ENCODE measurements at regions of chr19 and their contacts with region 1.

Region 1: GRCh38 chr19:14689598-14690503 is at the start of gene ZNF333:
- DNase-seq: peak; percentile 100
- ATAC-seq: peak; percentile 94
- H3K4me3 Mint-ChIP-seq: peak within 1 kb of the TSS; percentile 79
- H3K27ac Mint-ChIP-seq: peak within 1 kb of the TSS; percentile 95
- H3K4me1 Mint-ChIP-seq: peaks cover 17% of the 10 kb centered on the region
- H3K27me3 Mint-ChIP-seq: no peaks in the 10 kb centered on the region
- total RNA-seq, gene ZNF333: 11.7 to 12.7 TPM

Region 2: GRCh38 chr19:14432791-14433553 is 256.9 kb before region 1 on chr19 and contains the start of gene PKN1:
- CTCF ChIA-PET with region 1: no interaction called
- POLR2A ChIA-PET with region 1: no interaction called
- intact Hi-C with region 1: loop called in 1 of 2 experiments (anchors 5 kb)
- DNase-seq: peak; percentile 75
- ATAC-seq: peak; percentile 11
- H3K4me3 Mint-ChIP-seq: peak within 1 kb of the TSS; percentile 73
- H3K27ac Mint-ChIP-seq: peak within 1 kb of the TSS; percentile 71
- H3K4me1 Mint-ChIP-seq: peaks cover 30% of the 10 kb centered on the region
- H3K27me3 Mint-ChIP-seq: no peaks in the 10 kb centered on the region
- total RNA-seq, gene PKN1: 173 to 176 TPM

Region 3: GRCh38 chr19:14540741-14541525 is 148.9 kb before region 1 on chr19:
- CTCF ChIA-PET with region 1: no interaction called
- POLR2A ChIA-PET with region 1: no interaction called
- intact Hi-C with region 1: no loop called
- DNase-seq: no peak
- ATAC-seq: no peak
- H3K4me3 Mint-ChIP-seq: no peak overlapping the region
- H3K27ac Mint-ChIP-seq: no peak overlapping the region
- H3K4me1 Mint-ChIP-seq: peaks cover 45% of the 10 kb centered on the region
- H3K27me3 Mint-ChIP-seq: no peaks in the 10 kb centered on the region

Region 4: DNA sequence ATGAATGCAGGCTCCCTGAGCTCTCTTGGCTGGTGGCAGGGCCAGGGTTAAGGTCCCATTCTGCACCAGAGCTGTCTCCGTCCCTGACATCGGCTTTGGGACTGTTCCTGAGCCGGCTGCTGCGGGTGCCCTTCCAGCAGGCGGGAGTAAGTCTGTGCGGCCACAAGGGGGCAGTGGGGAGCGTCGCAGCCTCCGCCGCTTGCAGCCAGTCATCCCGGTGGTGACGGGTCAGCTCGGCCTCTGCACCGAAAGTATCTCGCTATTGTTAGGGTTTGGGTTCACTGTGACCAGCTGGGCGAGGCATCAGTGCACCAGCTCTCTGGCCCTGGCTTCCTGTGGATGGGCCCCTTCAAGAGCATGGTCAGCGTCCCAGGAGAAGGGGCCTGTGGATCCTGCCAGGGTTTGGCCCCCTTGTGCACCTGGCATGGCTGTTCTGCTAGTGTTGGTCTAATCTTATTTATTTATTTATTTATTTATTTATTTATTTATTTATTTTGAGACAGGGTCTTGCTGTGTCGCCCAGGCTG is 133.1 kb before region 1 on chr19:
- CTCF ChIA-PET with region 1: interaction called, 31 read pairs
- POLR2A ChIA-PET with region 1: no interaction called
- intact Hi-C with region 1: loop called in 1 of 2 experiments (anchors 1 kb)
- DNase-seq: peak; percentile 89
- ATAC-seq: peak; percentile 95
- H3K4me3 Mint-ChIP-seq: no peak overlapping the region
- H3K27ac Mint-ChIP-seq: no peak overlapping the region
- H3K4me1 Mint-ChIP-seq: peaks cover 46% of the 10 kb centered on the region
- H3K27me3 Mint-ChIP-seq: no peaks in the 10 kb centered on the region

Region 5: DNA sequence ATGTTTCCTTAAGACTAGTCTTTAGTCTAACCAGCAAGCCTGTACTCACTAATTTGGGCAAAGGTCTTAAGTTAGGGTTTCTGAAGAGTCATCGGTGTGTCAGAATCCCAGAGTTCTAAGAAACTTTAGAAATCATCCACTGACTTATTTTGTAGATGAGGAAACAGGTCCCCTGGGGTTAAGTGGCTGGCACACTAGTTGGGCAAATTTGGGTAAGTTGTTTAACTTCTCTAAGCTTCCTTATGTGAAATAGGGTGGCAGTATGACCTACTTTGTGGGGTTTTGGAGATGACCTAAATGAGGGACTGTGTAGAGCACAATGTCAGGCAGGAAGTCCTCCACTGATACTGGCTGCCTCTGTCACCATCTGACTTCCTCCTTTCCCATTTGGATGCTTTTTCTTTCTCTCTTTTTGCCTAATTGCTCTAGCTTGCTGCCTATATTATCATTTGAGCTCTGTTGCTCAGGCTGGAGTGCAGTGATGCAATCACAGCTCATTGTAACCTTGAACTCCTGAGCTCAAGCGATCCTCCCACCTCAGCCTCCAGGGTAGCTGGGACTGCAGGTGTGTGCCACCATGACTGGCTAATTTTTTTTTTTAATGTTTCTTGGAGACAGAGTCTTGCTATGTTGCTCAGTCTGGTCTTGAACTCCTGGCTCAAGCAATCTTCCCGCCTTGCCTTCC is 17.5 kb before region 1 on chr19:
- CTCF ChIA-PET with region 1: interaction called, 20 read pairs
- POLR2A ChIA-PET with region 1: no interaction called
- intact Hi-C with region 1: no loop called
- DNase-seq: no peak
- ATAC-seq: no peak
- H3K4me3 Mint-ChIP-seq: no peak overlapping the region
- H3K27ac Mint-ChIP-seq: no peak overlapping the region
- H3K4me1 Mint-ChIP-seq: peaks cover 10% of the 10 kb centered on the region
- H3K27me3 Mint-ChIP-seq: peaks cover 19% of the 10 kb centered on the region

Region 6: GRCh38 chr19:14821937-14822336 is 132.1 kb after region 1 on chr19:
- CTCF ChIA-PET with region 1: no interaction called
- POLR2A ChIA-PET with region 1: no interaction called
- intact Hi-C with region 1: no loop called
- DNase-seq: no peak
- ATAC-seq: no peak
- H3K4me3 Mint-ChIP-seq: no peak overlapping the region
- H3K27ac Mint-ChIP-seq: no peak overlapping the region
- H3K4me1 Mint-ChIP-seq: no peaks in the 10 kb centered on the region
- H3K27me3 Mint-ChIP-seq: peaks cover 35% of the 10 kb centered on the region

Region 7: DNA sequence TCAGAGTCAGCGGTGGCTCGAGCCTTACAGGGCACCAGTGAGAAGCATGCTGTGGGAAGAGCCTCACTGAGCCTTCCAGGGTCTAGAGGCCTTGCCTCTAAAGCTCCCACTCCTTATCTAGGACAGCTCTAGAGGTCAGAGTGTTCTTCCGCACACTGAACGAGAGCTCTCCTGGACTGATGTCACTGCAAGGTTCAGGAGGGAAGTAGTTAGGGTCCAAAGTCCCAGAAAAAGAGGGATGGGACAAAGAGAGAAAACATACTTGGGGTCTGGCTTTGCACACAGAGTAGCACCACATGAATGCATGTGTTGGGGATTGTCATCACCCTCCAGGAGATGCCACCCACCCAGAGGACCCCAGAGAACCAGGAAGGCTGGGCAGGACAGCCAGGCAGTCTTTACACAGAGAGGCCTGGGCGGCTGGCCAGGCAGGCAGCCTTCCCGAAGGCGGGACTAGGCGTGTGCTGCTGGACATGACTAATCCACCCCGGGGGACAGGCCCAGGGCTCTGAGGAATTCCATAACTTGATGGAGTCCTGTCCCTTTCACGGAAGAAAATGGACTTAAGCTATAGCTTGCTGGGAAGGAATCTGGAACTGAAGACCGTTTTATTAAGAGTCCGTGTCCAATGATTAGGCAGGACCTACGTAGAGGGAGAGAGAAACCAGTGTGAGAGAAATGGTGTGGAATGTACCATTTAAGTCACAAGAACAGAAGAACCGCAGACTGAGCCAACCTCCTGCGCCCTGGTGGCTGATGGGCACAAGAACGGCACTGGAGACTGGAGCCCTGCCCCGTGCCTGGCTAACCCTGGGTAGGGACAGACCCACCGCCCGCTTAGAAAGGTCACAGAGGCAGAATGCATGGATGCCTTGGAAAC is 559.0 kb after region 1 on chr19:
- CTCF ChIA-PET with region 1: no interaction called
- POLR2A ChIA-PET with region 1: no interaction called
- intact Hi-C with region 1: no loop called
- DNase-seq: no peak
- ATAC-seq: no peak
- H3K4me3 Mint-ChIP-seq: no peak overlapping the region
- H3K27ac Mint-ChIP-seq: no peak overlapping the region
- H3K4me1 Mint-ChIP-seq: no peaks in the 10 kb centered on the region
- H3K27me3 Mint-ChIP-seq: no peaks in the 10 kb centered on the region

Region 8: GRCh38 chr19:15379083-15379995 is 689.5 kb after region 1 on chr19 and contains the start of gene AKAP8:
- CTCF ChIA-PET with region 1: no interaction called
- POLR2A ChIA-PET with region 1: interaction called, 4 read pairs
- intact Hi-C with region 1: loop called in 1 of 2 experiments (anchors 1 kb)
- DNase-seq: peak; percentile 99
- ATAC-seq: peak; percentile 91
- H3K4me3 Mint-ChIP-seq: peak within 1 kb of the TSS; percentile 88
- H3K27ac Mint-ChIP-seq: peak within 1 kb of the TSS; percentile 100
- H3K4me1 Mint-ChIP-seq: peaks cover 37% of the 10 kb centered on the region
- H3K27me3 Mint-ChIP-seq: no peaks in the 10 kb centered on the region
- total RNA-seq, gene AKAP8: 47.9 to 54.3 TPM

Measured in activated CD4-positive, alpha-beta T cell treated with anti-CD3 and anti-CD28 coated beads for 36 hours (primary cell).